ENCODE measurements at regions of chr3 and their contacts with region 1.

Region 1: DNA sequence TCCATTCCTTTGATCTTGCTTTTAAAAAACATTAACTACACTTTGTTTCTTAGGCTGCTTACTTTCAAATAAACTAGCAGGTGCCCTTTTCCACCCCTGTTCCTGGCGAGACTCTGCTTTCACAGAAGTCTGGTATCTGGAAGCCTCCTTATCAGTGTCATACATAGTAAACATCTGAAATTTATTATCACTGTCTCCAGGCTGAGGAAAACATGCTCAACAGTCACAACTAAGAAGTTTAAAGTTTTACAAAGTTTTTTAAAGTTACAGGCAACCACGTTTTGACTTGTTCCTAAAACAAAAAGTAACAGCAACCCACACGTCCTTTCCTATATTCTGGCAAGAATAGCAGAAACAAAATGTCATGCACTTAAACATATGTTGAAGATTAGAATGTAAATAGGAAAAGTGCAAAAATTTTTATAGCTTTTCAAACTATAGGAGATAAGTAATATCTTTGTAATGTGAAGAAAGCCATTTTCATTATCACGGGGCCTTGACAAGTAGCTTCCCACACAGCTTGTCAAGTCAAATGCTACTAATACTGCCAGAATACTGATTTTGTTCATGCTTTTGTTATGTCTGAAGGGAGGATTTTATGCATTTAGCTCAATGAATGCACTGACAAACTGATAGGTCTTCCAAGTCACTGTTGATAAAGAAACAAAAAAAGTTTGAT is 275.2 kb upstream of the KCNMB2 start:
- DNase-seq: no peak
- H3K4me3 ChIP-seq: no peak overlapping the region
- CTCF ChIP-seq: no peak

Region 2: GRCh38 chr3:178097576-178097975 is 163.4 kb before region 1 on chr3:
- in situ Hi-C with region 1: loop called (anchors 10 kb)
- DNase-seq: peak; percentile 26
- H3K4me3 ChIP-seq: no peak overlapping the region
- CTCF ChIP-seq: no peak

Region 3: DNA sequence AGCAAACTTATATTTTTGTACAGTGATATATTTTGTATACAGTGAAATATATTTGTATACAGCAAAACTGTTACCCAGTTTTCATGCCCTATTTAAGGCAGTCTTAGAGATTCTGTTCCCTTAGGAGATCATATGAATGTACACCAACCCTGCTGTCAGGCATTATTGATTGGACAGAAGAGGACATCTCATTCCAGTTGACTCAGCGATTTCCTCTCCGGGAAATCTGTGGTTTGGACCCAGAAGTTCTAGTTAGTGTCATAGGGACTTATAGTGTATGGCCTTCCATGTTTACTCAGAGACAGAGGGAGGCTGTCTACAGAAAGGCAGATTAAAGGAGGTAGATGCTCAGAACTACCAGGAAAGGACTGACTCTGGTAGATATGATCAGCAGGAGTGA is 43.5 kb before region 1 on chr3:
- in situ Hi-C with region 1: no loop called
- DNase-seq: no peak
- H3K4me3 ChIP-seq: no peak overlapping the region
- CTCF ChIP-seq: no peak